HepG2 (cell line): ENCODE measurements at regions of chr14 and their contacts with region 1.

Region 1: DNA sequence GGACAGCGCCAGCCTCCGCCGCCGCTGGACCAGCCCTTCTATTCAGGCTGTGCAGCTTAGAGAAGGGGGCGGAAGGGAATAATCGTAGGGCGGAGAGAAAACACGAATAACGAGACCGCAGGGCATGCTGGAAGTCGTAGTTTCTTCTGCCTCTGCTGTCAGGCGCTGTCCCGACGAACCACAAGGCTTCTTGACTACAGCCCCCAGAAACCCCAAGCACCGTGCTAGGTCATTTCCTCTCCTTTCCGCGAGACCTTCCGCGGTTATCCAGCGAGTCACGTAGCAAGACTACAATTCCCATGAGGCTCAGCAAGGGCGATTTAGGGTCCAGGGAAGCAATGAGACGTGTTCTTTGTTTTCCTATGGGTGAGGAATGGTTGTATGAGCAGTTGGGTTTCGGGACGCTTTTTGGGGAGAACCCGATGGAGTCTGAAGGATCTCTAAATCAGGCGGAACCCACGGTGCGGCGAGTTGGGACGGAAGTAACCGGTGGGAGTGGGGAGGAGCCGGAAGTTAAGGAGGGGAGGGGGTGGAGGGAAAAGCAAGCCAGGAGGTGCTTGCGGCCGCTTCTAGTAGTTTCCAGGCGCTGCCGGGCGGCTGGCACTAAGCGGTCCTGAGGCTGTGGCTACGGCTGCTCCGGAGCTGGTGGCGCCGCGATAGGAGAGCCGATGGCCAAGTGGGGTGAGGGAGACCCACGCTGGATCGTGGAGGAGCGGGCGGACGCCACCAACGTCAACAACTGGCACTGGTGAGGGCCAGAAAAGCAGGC is at the starts of genes AHSA1 and VIPAS39:
- DNase-seq: peak; percentile 99
- ATAC-seq: peak; percentile 95
- H3K4me3 ChIP-seq: peak within 1 kb of the TSS; percentile 79 to 98 (median 90)
- H3K27ac ChIP-seq: peak within 1 kb of the TSS; percentile 88
- H3K4me1 ChIP-seq: peaks cover 35% of the 10 kb centered on the region
- H3K27me3 ChIP-seq: no peaks in the 10 kb centered on the region; a peak in 1 of 5 replicates
- CTCF ChIP-seq: peak; percentile 28; the same call in 1 of the 2 replicates
- EP300 ChIP-seq: no peak; a peak in 1 of 4 replicates
- POLR2A ChIP-seq: peak; percentile 77 to 90
- RAD21 ChIP-seq: no peak
- total RNA-seq, gene AHSA1: 241 and 310 TPM in 2 replicates
- total RNA-seq, gene VIPAS39: 13.3 and 14.9 TPM in 2 replicates

Region 2: GRCh38 chr14:77320238-77320935 is 137.3 kb before region 1 on chr14 and contains the start of gene POMT2:
- CTCF ChIA-PET with region 1: no interaction called
- POLR2A ChIA-PET with region 1: interaction called, 10 read pairs
- in situ Hi-C with region 1: no loop called
- intact Hi-C with region 1: loop called (anchors 5 kb)
- DNase-seq: peak; percentile 88
- ATAC-seq: peak; percentile 83
- H3K4me3 ChIP-seq: peak within 1 kb of the TSS; percentile 79 to 93 (median 90)
- H3K27ac ChIP-seq: peak within 1 kb of the TSS; percentile 96
- H3K4me1 ChIP-seq: peaks cover 80% of the 10 kb centered on the region
- H3K27me3 ChIP-seq: no peaks in the 10 kb centered on the region
- CTCF ChIP-seq: peak; percentile 32; the same call in 1 of the 2 replicates
- EP300 ChIP-seq: no peak
- POLR2A ChIP-seq: peak in 1 of 2 experiments; percentile 78; a peak in 3 of 4 replicates
- RAD21 ChIP-seq: peak; percentile 54
- total RNA-seq, gene POMT2: 7.9 and 15.9 TPM in 2 replicates

Region 3: GRCh38 chr14:77376771-77377501 is 80.8 kb before region 1 on chr14 and contains the starts of genes SAMD15 and TMED8:
- CTCF ChIA-PET with region 1: no interaction called
- POLR2A ChIA-PET with region 1: interaction called, 5 read pairs
- in situ Hi-C with region 1: no loop called
- intact Hi-C with region 1: loop called (anchors 1 kb)
- DNase-seq: peak; percentile 69
- ATAC-seq: peak; percentile 99
- H3K4me3 ChIP-seq: peak within 1 kb of the TSS; percentile 97 to 99 (median 99)
- H3K27ac ChIP-seq: peak within 1 kb of the TSS; percentile 82
- H3K4me1 ChIP-seq: peaks cover 53% of the 10 kb centered on the region
- H3K27me3 ChIP-seq: no peaks in the 10 kb centered on the region
- CTCF ChIP-seq: peak; percentile 51
- EP300 ChIP-seq: no peak
- POLR2A ChIP-seq: peak in 1 of 2 experiments; percentile 65; a peak in 1 of 4 replicates
- RAD21 ChIP-seq: peak; percentile 72
- total RNA-seq, gene SAMD15: 1.3 and 2.0 TPM in 2 replicates
- total RNA-seq, gene TMED8: 11.7 and 17.5 TPM in 2 replicates

Region 4: DNA sequence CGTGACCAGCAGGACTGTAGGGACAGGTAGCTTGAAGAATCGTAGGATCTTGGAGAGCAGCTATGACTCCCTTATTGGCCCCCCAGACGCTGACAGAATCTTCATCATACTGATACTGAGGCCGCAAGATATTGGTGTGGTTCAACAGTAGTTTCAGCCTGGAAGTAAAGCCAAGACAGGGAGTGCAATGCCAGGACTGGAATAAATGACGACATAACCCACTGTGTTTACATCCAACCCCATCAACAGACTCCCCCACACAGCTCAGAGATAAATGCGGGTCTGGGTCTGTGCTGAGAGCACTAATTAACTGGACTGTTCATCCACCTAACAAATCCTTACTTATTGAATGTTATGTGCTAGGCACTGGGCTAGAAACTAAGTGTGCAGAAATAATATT is 51.0 kb before region 1 on chr14:
- CTCF ChIA-PET with region 1: no interaction called
- POLR2A ChIA-PET with region 1: no interaction called
- in situ Hi-C with region 1: no loop called
- intact Hi-C with region 1: no loop called
- DNase-seq: no peak
- ATAC-seq: no peak
- H3K4me3 ChIP-seq: no peak overlapping the region
- H3K27ac ChIP-seq: no peak overlapping the region
- H3K4me1 ChIP-seq: peaks cover 9% of the 10 kb centered on the region
- H3K27me3 ChIP-seq: no peaks in the 10 kb centered on the region
- CTCF ChIP-seq: no peak
- EP300 ChIP-seq: no peak
- POLR2A ChIP-seq: no peak
- RAD21 ChIP-seq: no peak

Region 5: GRCh38 chr14:77498120-77498979 is 40.6 kb after region 1 on chr14 and contains the start of gene ISM2:
- CTCF ChIA-PET with region 1: no interaction called
- POLR2A ChIA-PET with region 1: interaction called, 7 read pairs
- in situ Hi-C with region 1: no loop called
- intact Hi-C with region 1: loop called (anchors 2 kb)
- DNase-seq: peak; percentile 44
- ATAC-seq: peak; percentile 82
- H3K4me3 ChIP-seq: peak within 1 kb of the TSS; percentile 69 to 88 (median 84)
- H3K27ac ChIP-seq: peak within 1 kb of the TSS; percentile 74
- H3K4me1 ChIP-seq: peaks cover 60% of the 10 kb centered on the region
- H3K27me3 ChIP-seq: no peaks in the 10 kb centered on the region; a peak in 1 of 5 replicates
- CTCF ChIP-seq: no peak
- EP300 ChIP-seq: no peak
- POLR2A ChIP-seq: peak in 1 of 2 experiments; percentile 94; a peak in 2 of 4 replicates
- RAD21 ChIP-seq: no peak; the same call in 1 of the 2 replicates
- total RNA-seq, gene ISM2: 0.83 and 1.8 TPM in 2 replicates

Region 6: DNA sequence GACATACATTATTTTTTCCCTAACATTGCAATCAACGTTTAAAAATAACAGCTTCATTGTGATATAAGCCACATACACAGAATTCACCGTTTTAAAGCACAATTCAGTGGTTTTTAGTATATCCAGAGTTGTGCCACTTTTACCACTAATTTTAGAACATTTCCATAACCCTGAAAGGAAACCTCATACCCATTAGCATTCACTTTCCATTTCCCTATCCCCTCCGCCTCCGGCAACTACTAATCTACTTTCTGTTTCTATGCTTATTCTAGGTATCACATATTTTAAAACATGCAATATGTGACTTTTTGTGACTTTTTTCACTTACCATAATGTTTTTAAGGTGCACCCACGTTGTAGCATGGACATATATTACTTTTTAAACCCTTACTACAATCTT is 96.5 kb after region 1 on chr14:
- CTCF ChIA-PET with region 1: interaction called, 14 read pairs
- POLR2A ChIA-PET with region 1: no interaction called
- in situ Hi-C with region 1: loop called (anchors 5 kb)
- intact Hi-C with region 1: loop called (anchors 1 kb)
- DNase-seq: no peak
- ATAC-seq: no peak
- H3K4me3 ChIP-seq: no peak overlapping the region
- H3K27ac ChIP-seq: no peak overlapping the region
- H3K4me1 ChIP-seq: no peaks in the 10 kb centered on the region
- H3K27me3 ChIP-seq: no peaks in the 10 kb centered on the region
- CTCF ChIP-seq: no peak
- EP300 ChIP-seq: no peak
- POLR2A ChIP-seq: no peak
- RAD21 ChIP-seq: no peak

Region 7: DNA sequence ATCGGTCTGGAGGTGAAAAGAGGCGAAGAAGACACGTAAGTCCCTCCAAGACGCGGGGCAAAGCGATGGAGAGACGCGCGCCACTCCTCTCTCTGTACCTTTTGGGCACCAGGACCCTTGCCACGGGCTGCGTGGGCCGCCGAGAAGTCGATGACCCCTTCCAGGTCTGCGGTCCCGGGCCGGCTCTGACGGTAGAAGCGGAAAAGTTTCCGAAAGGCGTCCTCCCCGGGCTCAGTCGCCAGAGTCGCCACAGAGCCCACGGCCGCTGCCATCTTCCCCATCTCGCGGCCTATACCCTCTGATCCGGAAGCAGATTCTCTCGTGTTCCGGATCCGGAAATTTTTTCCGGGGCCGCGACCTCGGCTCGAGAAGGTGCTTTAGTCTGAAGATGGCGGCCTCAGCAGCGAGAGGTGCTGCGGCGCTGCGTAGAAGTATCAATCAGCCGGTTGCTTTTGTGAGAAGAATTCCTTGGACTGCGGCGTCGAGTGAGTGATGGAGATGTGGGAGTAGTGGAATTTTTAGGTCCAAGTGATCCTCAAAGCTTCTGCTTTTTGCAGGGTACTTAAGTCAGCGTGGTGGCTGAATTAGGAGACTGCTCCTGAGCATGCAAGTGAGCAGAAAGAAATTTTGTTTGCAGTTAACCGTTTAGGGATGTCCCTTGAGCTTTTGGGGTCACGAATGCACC is 250.2 kb after region 1 on chr14 and contains the starts of genes ALKBH1 and SLIRP:
- CTCF ChIA-PET with region 1: no interaction called
- POLR2A ChIA-PET with region 1: no interaction called
- in situ Hi-C with region 1: no loop called
- intact Hi-C with region 1: no loop called
- DNase-seq: peak; percentile 81
- ATAC-seq: peak; percentile 97
- H3K4me3 ChIP-seq: peak within 1 kb of the TSS; percentile 92 to 97 (median 92)
- H3K27ac ChIP-seq: peak within 1 kb of the TSS; percentile 69
- H3K4me1 ChIP-seq: peaks cover 28% of the 10 kb centered on the region
- H3K27me3 ChIP-seq: no peaks in the 10 kb centered on the region; a peak in 1 of 5 replicates
- CTCF ChIP-seq: peak; percentile 14; the same call in 1 of the 2 replicates
- EP300 ChIP-seq: no peak
- POLR2A ChIP-seq: peak; percentile 91 to 93
- RAD21 ChIP-seq: no peak
- total RNA-seq, gene ALKBH1: 14.3 and 14.5 TPM in 2 replicates
- total RNA-seq, gene SLIRP: 548 and 656 TPM in 2 replicates